Activated naive CD4-positive, alpha-beta T cell treated with anti-CD3 and anti-CD28 coated beads for 36 hours (primary cell): ENCODE measurements at regions of chr16 and their contacts with region 1.

Region 1: DNA sequence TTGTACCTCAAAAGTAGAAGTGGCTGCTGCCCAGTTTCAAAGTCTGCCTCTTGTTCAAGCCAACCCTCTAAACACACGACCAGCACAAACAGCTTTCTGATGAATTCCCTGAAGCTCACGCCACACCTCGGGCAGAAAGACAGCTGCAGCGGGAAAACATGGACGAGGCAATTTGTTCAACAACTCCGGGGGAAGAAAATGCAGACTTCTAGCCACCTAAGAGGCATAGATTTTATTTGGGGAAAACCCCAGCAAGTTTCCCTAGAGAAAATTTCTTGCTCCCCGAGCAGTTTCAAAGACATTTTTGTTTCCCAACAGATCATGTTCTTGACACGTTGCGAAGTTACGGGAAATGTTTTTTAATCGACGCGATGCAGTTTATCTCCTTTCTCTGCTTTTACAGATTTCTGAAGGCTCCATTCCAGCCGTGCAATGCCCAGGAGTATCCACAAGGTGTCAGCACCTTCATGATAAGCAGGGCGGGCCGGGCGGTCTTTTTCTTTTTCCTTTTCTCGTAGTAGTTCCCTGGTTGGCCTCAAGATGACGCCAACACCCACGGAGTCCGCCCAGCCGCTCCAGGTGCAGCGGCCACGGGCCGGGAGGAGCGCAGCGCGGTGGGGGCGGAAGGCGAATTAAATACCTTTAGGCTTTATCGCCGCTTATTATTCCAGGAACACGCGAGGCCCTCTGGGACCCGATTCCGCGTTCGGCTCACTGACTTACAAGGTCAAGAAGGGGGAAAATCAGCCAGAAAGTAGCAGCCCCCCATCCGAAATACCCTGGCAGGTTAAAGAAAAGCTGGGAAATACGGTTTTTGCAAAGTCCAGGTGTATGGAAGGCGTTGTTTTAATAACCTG is 2.9 kb upstream of the FOXC2 start:
- DNase-seq: peak; percentile 95
- H3K4me3 Mint-ChIP-seq: no peak overlapping the region
- H3K27ac Mint-ChIP-seq: no peak overlapping the region
- H3K4me1 Mint-ChIP-seq: peaks cover 21% of the 10 kb centered on the region
- H3K27me3 Mint-ChIP-seq: peaks cover 55% of the 10 kb centered on the region

Region 2: DNA sequence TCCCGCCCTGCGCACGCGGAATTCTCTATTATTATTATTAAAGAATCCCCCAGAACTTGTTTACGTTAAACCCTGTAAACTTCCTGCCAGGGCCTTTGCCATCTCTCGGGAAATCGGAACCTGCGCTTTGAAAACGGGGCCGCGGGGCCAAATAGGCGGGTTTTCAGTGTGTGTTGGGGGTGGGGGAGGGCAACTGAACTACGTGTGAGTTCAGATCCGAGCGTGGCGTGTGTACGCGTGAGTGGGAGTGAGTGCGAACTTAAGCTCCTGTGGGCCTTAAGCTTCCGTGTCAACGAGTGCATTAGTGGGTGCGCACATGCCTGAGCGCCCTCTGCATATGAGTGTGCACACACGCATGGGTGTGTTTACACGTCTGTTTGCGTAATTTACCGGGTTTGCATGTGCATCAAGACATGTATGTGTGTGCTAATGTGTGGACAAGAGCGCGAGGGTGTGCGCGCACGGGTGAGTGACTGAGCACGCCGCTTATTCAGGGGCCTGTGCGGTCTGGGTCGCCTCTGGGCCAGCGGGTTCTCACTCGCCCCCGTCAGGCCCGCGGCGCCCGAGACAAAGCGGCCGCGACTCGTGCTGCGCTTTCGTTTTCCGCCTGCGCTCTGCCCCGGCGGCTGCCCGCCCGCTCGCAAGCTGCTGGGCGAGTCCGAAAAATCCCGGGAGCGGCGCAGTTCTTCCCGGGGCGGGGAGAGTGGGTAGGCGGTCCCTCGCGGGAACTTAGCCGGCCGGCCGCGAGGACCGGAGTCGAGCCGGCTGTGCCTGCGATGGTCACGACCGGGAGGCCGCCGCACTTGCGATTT is 54.6 kb before region 1 on chr16:
- CTCF ChIA-PET with region 1: interaction called, 3 read pairs
- intact Hi-C with region 1: loop called (anchors 5 kb)
- DNase-seq: no peak
- H3K4me3 Mint-ChIP-seq: peak overlapping the region; percentile 54
- H3K27ac Mint-ChIP-seq: peak overlapping the region; percentile 46
- H3K4me1 Mint-ChIP-seq: peaks cover 32% of the 10 kb centered on the region
- H3K27me3 Mint-ChIP-seq: peaks cover 62% of the 10 kb centered on the region

Region 3: GRCh38 chr16:86640265-86640843 is 76.6 kb after region 1 on chr16:
- CTCF ChIA-PET with region 1: no interaction called
- intact Hi-C with region 1: no loop called
- DNase-seq: no peak
- H3K4me3 Mint-ChIP-seq: no peak overlapping the region
- H3K27ac Mint-ChIP-seq: no peak overlapping the region
- H3K4me1 Mint-ChIP-seq: no peaks in the 10 kb centered on the region
- H3K27me3 Mint-ChIP-seq: peaks cover 2% of the 10 kb centered on the region

Region 4: GRCh38 chr16:86732621-86733295 is 169.0 kb after region 1 on chr16:
- CTCF ChIA-PET with region 1: interaction called, 3 read pairs
- intact Hi-C with region 1: loop called (anchors 10 kb)
- DNase-seq: no peak
- H3K4me3 Mint-ChIP-seq: no peak overlapping the region
- H3K27ac Mint-ChIP-seq: no peak overlapping the region
- H3K4me1 Mint-ChIP-seq: no peaks in the 10 kb centered on the region
- H3K27me3 Mint-ChIP-seq: peaks cover 44% of the 10 kb centered on the region

Region 5: DNA sequence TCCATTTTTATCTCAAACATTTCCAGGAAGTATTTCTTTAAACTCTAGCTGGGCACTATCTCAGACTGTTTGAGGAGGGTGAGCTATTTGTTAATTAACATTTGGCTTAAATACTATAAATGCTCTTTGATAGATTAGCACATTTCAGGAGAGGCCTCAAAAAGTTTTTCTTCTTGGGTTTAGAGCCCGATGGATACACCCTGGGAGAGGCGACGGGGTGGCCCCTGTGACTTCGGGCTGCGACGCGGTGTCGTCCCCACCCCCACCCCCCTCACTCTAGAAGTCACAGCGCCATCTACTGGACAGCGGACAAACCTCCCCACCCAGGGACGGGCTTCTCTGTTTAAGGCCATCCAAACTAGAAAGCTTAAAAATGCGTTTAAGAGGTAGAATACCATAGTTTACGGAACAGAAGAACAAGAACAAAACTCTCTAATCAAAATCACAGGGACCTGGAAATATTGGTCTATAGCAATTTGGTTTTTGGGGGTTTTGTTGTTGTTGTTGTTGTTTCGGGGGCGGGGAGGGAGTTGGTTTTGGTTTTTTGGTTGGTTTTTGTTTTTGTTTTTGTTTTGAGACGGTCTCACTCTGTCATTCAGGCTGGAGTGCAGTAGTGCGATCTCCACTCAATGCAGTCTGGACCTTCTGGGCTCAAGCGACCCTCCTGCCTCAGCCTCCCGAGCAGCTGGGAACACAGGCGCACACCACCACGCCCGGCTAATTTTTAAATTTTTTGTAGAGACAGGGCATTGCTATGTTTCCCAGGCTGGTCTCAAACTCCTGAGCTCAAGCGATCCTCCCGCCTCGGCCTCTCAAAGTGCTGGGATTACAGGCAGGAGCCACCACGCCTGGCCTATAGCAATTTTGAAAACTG is 499.1 kb after region 1 on chr16:
- CTCF ChIA-PET with region 1: interaction called, 22 read pairs
- intact Hi-C with region 1: loop called (anchors 1 kb)
- DNase-seq: peak; percentile 79
- H3K4me3 Mint-ChIP-seq: no peak overlapping the region
- H3K27ac Mint-ChIP-seq: no peak overlapping the region
- H3K4me1 Mint-ChIP-seq: no peaks in the 10 kb centered on the region
- H3K27me3 Mint-ChIP-seq: peaks cover 34% of the 10 kb centered on the region

Region 6: GRCh38 chr16:87297918-87298631 is 734.4 kb after region 1 on chr16:
- CTCF ChIA-PET with region 1: interaction called, 3 read pairs
- intact Hi-C with region 1: loop called (anchors 5 kb)
- DNase-seq: peak; percentile 53
- H3K4me3 Mint-ChIP-seq: no peak overlapping the region
- H3K27ac Mint-ChIP-seq: no peak overlapping the region
- H3K4me1 Mint-ChIP-seq: peaks cover 4% of the 10 kb centered on the region
- H3K27me3 Mint-ChIP-seq: no peaks in the 10 kb centered on the region